Left cardiac atrium (tissue), 4 donors: ENCODE measurements at regions of chr9 and their contacts with region 1.

Region 1: DNA sequence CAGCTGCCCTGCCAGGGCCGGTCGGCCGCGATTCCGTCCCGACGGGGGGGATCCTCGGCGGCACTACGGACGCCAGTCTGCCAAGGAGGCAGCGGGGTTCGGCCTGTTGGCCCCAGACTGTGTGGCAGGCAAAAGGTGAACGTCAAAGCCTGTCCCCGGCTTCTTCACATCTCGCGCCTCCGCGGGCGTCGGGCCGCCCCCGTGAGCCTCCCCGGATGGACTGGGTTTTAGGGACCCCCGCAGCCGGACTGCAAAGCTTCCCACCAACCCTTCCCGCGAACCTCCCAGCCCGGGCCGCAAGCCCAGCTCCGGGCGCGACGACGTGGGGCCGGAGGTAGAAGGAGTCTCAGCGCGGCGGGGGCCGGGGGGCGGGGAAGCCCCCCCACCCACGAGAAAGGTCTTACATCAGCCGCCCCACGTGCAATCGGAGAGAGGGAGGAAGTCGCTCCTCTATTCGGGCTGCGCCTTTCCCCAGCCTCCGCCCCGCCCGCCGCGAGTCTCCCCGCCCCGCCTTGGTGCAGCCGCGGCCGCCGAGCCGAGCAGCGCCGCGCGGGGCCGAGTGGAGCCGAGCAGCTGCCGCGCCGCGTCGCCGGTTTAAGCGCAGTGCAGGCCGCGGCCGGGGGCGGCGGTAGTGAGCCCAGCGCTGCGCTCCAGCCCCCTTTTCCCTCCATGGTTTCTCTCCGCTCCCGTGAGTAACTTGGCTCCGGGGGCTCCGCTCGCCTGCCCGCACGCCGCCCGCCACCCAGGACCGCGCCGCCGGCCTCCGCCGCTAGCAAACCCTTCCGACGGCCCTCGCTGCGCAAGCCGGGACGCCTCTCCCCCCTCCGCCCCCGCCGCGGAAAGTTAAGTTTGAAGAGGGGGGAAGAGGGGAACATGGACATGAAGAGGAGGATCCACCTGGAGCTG is at the start of gene ANP32B:
- DNase-seq: peak; percentile 93
- ATAC-seq: peak; percentile 91 to 95
- total RNA-seq, gene ANP32B: 55.2 to 70.2 TPM

Region 2: DNA sequence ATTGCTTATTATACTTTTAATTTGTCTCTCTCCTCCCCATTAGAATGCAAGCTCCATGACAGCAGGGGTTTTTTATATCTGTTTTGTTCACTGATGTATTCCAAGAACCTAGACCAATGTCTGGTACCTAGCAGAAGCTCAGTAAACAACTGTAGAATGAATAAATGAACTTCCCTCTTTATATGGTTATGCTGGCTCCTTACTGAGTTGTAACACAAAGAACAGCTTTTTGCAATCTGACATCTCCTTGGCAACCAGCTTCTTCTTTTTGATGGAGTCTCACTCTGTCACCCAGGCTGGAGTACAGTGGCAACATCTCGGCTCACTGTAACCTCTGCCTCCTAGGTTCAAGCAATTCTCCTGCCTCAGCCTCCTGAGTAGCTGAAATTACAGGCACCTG is 74.2 kb before region 1 on chr9:
- intact Hi-C with region 1: no loop called
- DNase-seq: no peak
- ATAC-seq: no peak

Region 3: GRCh38 chr9:98034593-98035546 is 51.9 kb after region 1 on chr9:
- intact Hi-C with region 1: loop called in 1 of 2 experiments (anchors 10 kb)
- DNase-seq: peak; percentile 89
- ATAC-seq: peak; percentile 80 to 89

Region 4: DNA sequence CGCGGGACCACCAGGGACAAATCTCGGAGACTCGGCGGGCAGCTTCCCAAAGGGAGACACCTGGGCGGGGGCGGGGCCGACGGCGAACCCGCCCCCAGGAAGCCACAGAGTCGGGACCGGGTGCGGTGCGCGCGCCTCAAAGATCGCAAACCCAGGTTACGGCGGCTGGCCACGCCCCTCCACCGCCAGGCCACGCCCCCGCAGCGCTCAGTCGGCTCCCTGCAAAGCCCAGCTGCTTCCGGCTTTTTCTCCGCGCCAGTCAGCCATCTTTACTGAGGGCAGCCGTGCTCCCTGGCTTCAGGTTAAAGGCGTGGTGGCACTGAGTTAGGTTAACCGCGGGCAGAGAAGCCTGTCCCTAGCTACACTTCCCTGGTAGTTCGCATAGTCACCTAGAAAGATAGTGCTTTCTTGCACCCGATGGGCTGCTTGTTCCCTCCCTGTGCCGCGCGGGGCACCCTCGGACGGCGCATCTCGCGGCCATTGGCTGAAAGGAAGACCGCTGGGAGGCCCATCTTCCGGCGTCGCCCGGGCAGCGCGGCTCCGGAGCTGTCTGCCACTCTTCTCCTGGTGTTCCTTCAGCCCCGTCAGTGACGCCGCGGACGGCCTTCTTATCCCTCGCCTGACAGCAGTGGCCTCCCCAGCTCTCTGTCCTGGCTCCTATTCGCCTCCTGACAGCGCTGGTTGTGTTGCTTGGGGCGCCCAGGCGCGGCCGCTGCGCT is 272.8 kb after region 1 on chr9 and contains the start of gene TBC1D2:
- intact Hi-C with region 1: loop called in 1 of 2 experiments (anchors 5 kb)
- DNase-seq: peak; percentile 94
- ATAC-seq: peak; percentile 97 to 98
- total RNA-seq, gene TBC1D2: 4.4 to 5.3 TPM